ENCODE measurements at regions of chr1 and their contacts with region 1.

Region 1: GRCh38 chr1:197526736-197527371 is 248.4 kb downstream of the DENND1B start:
- DNase-seq: no peak
- H3K4me3 ChIP-seq: no peak overlapping the region
- H3K27ac ChIP-seq: no peak overlapping the region
- H3K4me1 ChIP-seq: no peaks in the 10 kb centered on the region
- H3K27me3 ChIP-seq: no peaks in the 10 kb centered on the region
- CTCF ChIP-seq: peak in 3 of 4 experiments; percentile 28 to 67 (median 34)
- EP300 ChIP-seq: no peak
- POLR2A ChIP-seq: no peak

Region 2: DNA sequence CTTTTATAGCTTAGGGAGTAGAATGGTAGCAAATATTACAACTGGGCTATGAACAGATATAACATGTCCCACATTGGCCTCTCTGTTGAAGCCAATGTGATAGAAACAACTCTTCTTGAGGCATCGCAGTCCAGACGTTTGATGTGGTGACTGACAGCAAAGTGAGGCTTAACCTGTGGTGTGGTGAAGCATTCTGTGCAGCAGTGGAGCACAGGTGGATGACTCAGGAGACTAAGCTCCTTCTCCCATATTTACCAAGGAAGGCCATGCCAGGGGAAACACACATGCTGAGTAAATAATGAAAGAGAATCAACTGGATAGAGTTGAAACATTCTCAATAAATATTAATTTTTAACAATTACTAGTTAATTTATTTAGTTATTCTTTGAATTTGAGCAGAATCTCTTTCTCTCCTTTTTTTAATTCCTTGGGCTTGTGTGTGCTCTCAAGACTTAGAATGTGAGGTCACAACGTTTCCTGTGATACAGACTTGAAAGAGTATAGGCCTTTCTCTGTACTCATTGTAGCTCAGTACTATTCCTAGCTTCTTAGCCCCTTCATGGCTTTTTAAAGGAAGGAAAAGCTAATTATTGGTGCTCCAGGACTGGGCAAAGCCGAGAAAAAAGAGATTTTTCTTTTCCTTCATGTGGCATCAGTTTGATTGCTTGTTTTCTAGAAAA is 241.2 kb before region 1 on chr1:
- intact Hi-C with region 1: no loop called
- DNase-seq: no peak
- H3K4me3 ChIP-seq: no peak overlapping the region
- H3K27ac ChIP-seq: no peak overlapping the region
- H3K4me1 ChIP-seq: no peaks in the 10 kb centered on the region
- H3K27me3 ChIP-seq: no peaks in the 10 kb centered on the region
- CTCF ChIP-seq: no peak
- EP300 ChIP-seq: no peak
- POLR2A ChIP-seq: no peak

Region 3: GRCh38 chr1:197924516-197925123 is 397.8 kb after region 1 on chr1:
- intact Hi-C with region 1: loop called (anchors 5 kb)
- DNase-seq: no peak
- H3K4me3 ChIP-seq: no peak overlapping the region
- H3K27ac ChIP-seq: no peak overlapping the region
- H3K4me1 ChIP-seq: peaks cover 0 to 11% (median 3%) of the 10 kb centered on the region in 4 donors
- H3K27me3 ChIP-seq: peaks cover 20 to 83% (median 41%) of the 10 kb centered on the region in 3 donors
- CTCF ChIP-seq: peak in 3 of 4 experiments; percentile 39 to 57 (median 51)
- EP300 ChIP-seq: no peak
- POLR2A ChIP-seq: no peak

Measured in sigmoid colon (tissue), 7 donors.